Transverse colon (tissue), 4 donors: ENCODE measurements at regions of chr3 and their contacts with region 1.

Region 1: DNA sequence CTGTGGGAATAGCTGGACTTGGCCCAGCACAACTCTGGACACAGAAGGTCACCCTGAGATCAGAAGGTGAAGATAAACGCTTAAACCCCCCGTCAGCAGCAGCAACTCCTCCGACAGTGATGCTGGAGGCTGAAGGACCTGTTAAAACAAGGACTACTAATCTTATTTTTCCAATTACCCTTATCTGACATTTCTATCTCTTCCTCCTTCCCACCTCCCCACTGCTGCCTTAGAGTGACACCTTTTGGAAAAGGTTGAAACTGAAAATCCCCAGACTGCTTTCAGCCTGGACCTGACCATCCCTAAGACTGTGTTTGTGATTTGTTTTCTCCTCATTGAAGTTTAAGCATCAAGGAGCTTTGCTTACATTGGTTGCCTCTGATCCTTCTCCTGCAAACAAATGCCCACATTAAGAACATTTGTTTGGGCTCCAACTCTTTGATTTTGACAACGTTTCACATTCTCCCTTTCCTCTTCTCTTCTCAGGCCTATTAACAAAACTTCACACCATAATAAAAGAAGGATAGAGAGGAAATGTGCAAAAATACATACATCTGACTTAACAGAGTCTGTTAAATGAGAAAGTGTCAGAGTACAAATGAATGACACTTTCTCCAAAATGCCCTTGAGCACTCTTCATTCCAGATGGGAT is 410.6 kb upstream of the WNT5A start:
- DNase-seq: no peak
- H3K4me3 ChIP-seq: no peak overlapping the region
- H3K27ac ChIP-seq: no peak overlapping the region
- H3K4me1 ChIP-seq: no peaks in the 10 kb centered on the region
- H3K27me3 ChIP-seq: no peaks in the 10 kb centered on the region
- CTCF ChIP-seq: peak; percentile 20 to 30 (median 24)
- EP300 ChIP-seq: no peak
- POLR2A ChIP-seq: no peak

Region 2: DNA sequence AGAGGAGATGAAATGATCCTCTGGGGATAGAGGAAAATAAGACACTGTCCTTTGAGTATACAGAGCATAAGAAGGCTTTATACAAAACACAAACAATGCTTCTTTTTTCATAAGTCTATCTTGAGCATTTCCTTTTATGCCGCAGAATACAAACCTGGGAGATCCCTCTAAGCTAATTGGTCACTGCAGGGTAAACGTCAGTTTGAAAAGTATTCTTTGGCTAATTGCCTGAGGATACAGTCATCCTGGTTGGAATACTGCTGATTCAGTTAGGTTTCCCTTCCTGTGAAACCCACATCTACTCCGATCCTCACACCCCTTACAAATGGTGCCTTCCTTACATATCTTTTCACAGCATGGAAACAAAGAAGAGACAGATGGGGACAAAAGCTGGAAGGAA is 421.2 kb before region 1 on chr3:
- in situ Hi-C with region 1: loop called in 1 of 4 experiments (anchors 25 kb)
- intact Hi-C with region 1: loop called (anchors 10 kb)
- DNase-seq: no peak
- H3K4me3 ChIP-seq: no peak overlapping the region
- H3K27ac ChIP-seq: no peak overlapping the region
- H3K4me1 ChIP-seq: peaks cover 0 to 12% (median 9%) of the 10 kb centered on the region in 4 donors
- H3K27me3 ChIP-seq: peaks cover 25% of the 10 kb centered on the region
- CTCF ChIP-seq: no peak
- EP300 ChIP-seq: no peak
- POLR2A ChIP-seq: no peak

Region 3: DNA sequence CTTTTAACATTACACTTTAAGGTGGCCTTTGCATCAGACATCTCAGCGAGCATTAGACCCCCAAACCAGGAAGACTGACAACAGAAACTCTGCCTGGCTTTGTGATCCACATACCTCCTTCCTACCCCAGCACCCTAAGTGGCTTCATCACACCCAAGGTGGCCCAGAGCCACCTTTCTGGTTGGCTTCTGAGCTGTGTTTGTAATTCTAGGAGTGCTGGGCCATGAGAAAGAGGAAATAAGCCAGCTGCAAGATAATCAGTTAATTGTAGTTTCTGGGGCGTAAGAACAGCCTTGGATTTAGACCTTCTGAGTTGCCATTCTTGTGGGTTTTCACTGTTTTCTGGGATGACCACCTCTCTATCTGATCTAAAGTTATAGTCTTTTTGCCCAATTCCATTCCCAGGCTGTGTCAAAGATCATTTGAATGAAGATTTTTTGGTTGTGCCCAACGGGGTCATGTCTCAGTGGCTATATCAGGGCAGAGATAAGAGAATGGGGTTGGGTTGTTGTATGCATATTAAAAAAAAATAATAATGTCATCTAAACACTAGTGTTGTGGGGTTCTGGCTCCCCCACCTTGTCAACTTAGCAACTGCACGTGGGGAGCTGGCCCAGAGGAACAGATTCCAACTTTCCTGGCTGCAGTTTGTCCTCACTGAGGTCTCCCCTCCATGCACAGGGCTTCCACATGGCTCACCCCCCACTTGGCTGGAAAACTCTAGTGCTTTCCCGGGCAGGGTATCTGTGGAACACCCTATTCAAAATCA is 175.8 kb before region 1 on chr3:
- in situ Hi-C with region 1: no loop called
- intact Hi-C with region 1: no loop called
- DNase-seq: peak; percentile 32
- H3K4me3 ChIP-seq: no peak overlapping the region
- H3K27ac ChIP-seq: no peak overlapping the region
- H3K4me1 ChIP-seq: no peaks in the 10 kb centered on the region
- H3K27me3 ChIP-seq: no peaks in the 10 kb centered on the region
- CTCF ChIP-seq: peak; percentile 41 to 57 (median 52)
- EP300 ChIP-seq: no peak
- POLR2A ChIP-seq: no peak

Region 4: DNA sequence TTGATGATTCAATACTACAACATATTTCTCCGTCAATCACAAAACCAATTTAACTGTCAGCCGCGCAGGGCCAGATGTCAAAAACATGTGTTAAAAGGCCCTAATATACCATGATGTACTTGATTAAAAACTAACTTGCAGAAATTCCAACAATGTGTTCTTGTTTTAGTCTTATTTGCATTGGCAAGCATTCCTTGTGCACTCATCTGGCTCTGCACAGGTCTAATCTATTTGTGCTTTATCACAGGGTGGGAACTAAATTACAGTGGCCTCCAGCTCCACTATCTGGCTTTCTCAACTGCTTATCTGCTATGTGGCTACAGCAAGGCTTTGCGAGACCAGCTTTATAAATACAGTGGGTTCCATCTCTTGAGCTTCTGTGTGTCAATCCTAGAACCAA is 115.0 kb after region 1 on chr3:
- in situ Hi-C with region 1: no loop called
- intact Hi-C with region 1: no loop called
- DNase-seq: no peak
- H3K4me3 ChIP-seq: no peak overlapping the region
- H3K27ac ChIP-seq: no peak overlapping the region
- H3K4me1 ChIP-seq: no peaks in the 10 kb centered on the region
- H3K27me3 ChIP-seq: no peaks in the 10 kb centered on the region
- CTCF ChIP-seq: no peak
- EP300 ChIP-seq: no peak
- POLR2A ChIP-seq: no peak